GM23248 (cell line): ENCODE measurements at regions of chr10 and their contacts with region 1.

Region 1: GRCh38 chr10:132223156-132223590 is 36.4 kb downstream of the DPYSL4 start:
- DNase-seq: peak; percentile 93
- H3K4me3 ChIP-seq: no peak overlapping the region
- H3K27ac ChIP-seq: no peak overlapping the region
- H3K4me1 ChIP-seq: no peaks in the 10 kb centered on the region
- H3K27me3 ChIP-seq: no peaks in the 10 kb centered on the region

Region 2: DNA sequence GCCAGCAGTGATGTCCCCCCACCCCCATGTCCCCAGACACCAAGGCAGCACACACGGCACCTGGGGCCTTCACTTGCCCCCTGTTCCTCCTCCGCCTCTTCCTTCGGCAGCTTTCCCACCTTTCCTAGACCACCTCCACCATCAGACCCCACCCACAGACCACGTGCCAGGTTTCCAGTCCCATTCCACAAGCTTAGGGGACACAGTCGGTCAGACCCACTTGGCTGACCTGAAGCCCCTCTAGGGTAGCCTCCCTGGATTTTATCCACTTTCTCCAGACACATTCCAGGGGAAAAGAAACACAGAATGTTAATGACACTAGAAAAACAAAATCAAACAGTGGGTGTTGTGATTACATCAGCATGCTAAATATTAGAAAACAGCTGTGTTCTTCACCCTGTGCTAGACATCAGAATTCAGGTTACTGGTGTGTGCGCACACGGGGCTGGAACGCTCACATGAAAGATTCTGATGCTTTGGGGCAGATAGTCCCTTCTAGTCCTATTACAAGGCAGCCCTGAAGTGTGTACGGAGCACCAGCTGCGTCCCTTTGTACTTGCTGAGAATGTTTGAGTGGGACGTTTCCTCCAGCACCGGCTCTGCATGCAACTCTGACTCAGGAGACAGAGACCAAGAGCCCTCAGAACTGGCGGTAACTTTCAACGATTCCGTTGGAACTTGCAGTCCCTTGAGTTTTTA is 397.9 kb before region 1 on chr10:
- in situ Hi-C with region 1: no loop called
- DNase-seq: peak; percentile 2
- H3K4me3 ChIP-seq: no peak overlapping the region
- H3K27ac ChIP-seq: no peak overlapping the region
- H3K4me1 ChIP-seq: no peaks in the 10 kb centered on the region
- H3K27me3 ChIP-seq: no peaks in the 10 kb centered on the region; the same call in 1 of the 2 replicates

Region 3: GRCh38 chr10:132331526-132332432 is 108.6 kb after region 1 on chr10 and contains the start of gene LRRC27:
- in situ Hi-C with region 1: loop called (anchors 10 kb)
- DNase-seq: peak; percentile 98
- H3K4me3 ChIP-seq: peak within 1 kb of the TSS; percentile 99
- H3K27ac ChIP-seq: peak within 1 kb of the TSS; percentile 66
- H3K4me1 ChIP-seq: peaks cover 24% of the 10 kb centered on the region
- H3K27me3 ChIP-seq: no peaks in the 10 kb centered on the region
- total RNA-seq, gene LRRC27: 7.5 and 11.1 TPM in 2 replicates

Region 4: DNA sequence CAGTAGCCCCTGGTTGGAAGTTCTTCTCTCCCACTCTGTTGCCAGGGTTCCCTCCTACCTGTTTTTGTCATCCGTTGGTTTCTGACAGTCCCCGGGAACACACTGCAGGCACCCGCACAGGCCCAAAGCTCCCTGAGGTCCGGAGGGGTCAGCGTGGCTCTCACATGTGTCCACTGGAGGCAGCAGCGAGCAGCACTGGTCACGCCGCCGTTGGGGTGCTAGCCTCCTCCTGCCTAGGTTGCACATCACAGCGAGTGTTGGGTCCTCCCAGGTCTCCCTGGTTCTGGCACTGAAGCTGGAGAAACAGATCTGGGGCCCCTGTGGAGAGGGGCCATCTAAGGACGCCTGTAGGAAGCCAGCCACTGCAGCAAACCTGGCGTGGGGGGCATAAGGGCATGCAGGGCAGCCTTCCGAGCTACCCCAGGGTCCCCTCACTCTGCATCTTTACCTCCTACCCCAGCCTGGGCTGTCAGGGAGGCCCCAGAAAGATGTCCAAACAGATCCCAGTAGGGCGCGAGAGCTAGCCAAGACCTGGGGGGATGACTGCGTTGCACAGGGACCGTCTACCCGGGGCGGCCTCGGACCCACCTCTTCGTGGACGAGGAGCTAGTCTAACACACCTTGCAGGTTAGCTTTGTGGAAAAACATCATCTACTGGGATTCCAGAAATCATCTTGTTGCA is 137.7 kb after region 1 on chr10:
- in situ Hi-C with region 1: loop called (anchors 10 kb)
- DNase-seq: peak; percentile 27
- H3K4me3 ChIP-seq: no peak overlapping the region
- H3K27ac ChIP-seq: no peak overlapping the region
- H3K4me1 ChIP-seq: no peaks in the 10 kb centered on the region
- H3K27me3 ChIP-seq: no peaks in the 10 kb centered on the region

Region 5: GRCh38 chr10:132421392-132421877 is 198.3 kb after region 1 on chr10:
- in situ Hi-C with region 1: no loop called
- DNase-seq: peak; percentile 82
- H3K4me3 ChIP-seq: 0 out of 2 replicates have a peak overlapping the region, but pooled peaks have one; percentile 8
- H3K27ac ChIP-seq: peak overlapping the region; percentile 36; the same call in 1 of the 2 replicates
- H3K4me1 ChIP-seq: peaks cover 8% of the 10 kb centered on the region
- H3K27me3 ChIP-seq: no peaks in the 10 kb centered on the region

Region 6: GRCh38 chr10:132637477-132638129 is 414.4 kb after region 1 on chr10:
- in situ Hi-C with region 1: loop called (anchors 10 kb)
- DNase-seq: peak; percentile 76
- H3K4me3 ChIP-seq: peak overlapping the region; percentile 51
- H3K27ac ChIP-seq: no peak overlapping the region
- H3K4me1 ChIP-seq: peaks cover 14% of the 10 kb centered on the region
- H3K27me3 ChIP-seq: no peaks in the 10 kb centered on the region